ENCODE measurements at regions of chr14 and their contacts with region 1.

Region 1: DNA sequence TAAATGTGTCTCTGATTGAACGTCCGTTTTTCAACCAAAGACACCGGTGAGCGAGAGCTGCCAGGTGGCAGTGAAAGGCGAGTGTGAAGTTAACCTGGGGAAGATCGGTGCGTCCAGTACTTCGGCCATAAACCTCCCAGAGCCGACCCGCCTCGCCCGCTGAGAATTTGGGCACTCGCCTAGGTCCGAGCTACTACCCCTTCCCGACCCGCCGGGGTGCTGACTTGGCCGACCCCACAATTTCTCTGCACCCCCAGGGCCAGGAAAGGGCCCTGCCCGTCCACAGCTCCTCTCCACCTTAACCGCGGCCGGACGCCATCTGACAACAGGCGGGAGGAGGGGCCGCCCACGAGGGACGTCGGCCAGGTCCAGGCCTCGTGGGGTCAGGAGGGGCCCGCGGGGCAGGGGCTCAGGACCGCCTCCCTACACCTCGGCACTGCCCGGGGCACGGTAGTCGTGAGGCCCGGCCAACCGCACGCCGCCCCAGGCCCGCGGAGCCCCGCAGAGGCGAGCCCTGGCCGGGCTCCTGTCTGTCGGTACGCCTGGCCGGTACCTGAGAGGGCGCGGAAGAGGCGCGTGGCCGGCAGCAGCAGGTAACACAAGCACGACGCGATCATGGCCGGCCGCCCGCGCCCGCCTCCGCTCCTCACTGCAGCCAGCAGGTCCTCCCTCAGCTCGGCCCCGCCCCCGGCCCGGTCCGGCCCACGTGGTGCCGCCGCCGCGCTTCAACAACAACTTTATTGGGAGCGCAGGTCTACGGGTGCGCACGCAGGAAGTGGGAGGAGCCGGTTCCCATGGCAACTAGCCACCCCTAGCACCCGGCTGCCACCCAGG is at the start of gene ANGEL1:
- DNase-seq: peak; percentile 94 to 99 (median 98)
- ATAC-seq: peak; percentile 90
- H3K4me3 ChIP-seq: peak within 1 kb of the TSS; percentile 84
- H3K4me3 Mint-ChIP-seq: peak within 1 kb of the TSS; percentile 97
- H3K27ac ChIP-seq: peak within 1 kb of the TSS; percentile 67 to 85
- H3K27ac Mint-ChIP-seq: peak within 1 kb of the TSS; percentile 96
- H3K4me1 ChIP-seq: peaks cover 28% of the 10 kb centered on the region
- H3K4me1 Mint-ChIP-seq: peaks cover 35% of the 10 kb centered on the region
- H3K27me3 ChIP-seq: no peaks in the 10 kb centered on the region
- H3K27me3 Mint-ChIP-seq: no peaks in the 10 kb centered on the region
- CTCF ChIP-seq: no peak
- total RNA-seq, gene ANGEL1: 10.1 to 10.4 TPM

Region 2: GRCh38 chr14:76767681-76768656 is 44.5 kb before region 1 on chr14:
- CTCF ChIA-PET with region 1: no interaction called
- POLR2A ChIA-PET with region 1: interaction called, 7 read pairs
- intact Hi-C with region 1: loop called in 1 of 2 experiments (anchors 2 kb)
- DNase-seq: peak; percentile 37 to 98 (median 68)
- ATAC-seq: peak; percentile 96
- H3K4me3 ChIP-seq: peak overlapping the region; percentile 5
- H3K4me3 Mint-ChIP-seq: peak overlapping the region; percentile 43
- H3K27ac ChIP-seq: peak overlapping the region; percentile 70 to 78
- H3K27ac Mint-ChIP-seq: peak overlapping the region; percentile 94
- H3K4me1 ChIP-seq: peaks cover 38% of the 10 kb centered on the region
- H3K4me1 Mint-ChIP-seq: peaks cover 24% of the 10 kb centered on the region
- H3K27me3 ChIP-seq: peaks cover 0 to 2% of the 10 kb centered on the region in 2 experiments
- H3K27me3 Mint-ChIP-seq: no peaks in the 10 kb centered on the region
- CTCF ChIP-seq: no peak

Region 3: GRCh38 chr14:76829650-76830421 is 17.4 kb after region 1 on chr14:
- CTCF ChIA-PET with region 1: no interaction called
- POLR2A ChIA-PET with region 1: no interaction called
- intact Hi-C with region 1: no loop called
- DNase-seq: no peak
- ATAC-seq: no peak
- H3K4me3 ChIP-seq: no peak overlapping the region
- H3K4me3 Mint-ChIP-seq: no peak overlapping the region
- H3K27ac ChIP-seq: no peak overlapping the region
- H3K27ac Mint-ChIP-seq: no peak overlapping the region
- H3K4me1 ChIP-seq: no peaks in the 10 kb centered on the region
- H3K4me1 Mint-ChIP-seq: no peaks in the 10 kb centered on the region
- H3K27me3 ChIP-seq: peaks cover 0 to 3% of the 10 kb centered on the region in 2 experiments
- H3K27me3 Mint-ChIP-seq: peaks cover 12% of the 10 kb centered on the region
- CTCF ChIP-seq: no peak

Region 4: DNA sequence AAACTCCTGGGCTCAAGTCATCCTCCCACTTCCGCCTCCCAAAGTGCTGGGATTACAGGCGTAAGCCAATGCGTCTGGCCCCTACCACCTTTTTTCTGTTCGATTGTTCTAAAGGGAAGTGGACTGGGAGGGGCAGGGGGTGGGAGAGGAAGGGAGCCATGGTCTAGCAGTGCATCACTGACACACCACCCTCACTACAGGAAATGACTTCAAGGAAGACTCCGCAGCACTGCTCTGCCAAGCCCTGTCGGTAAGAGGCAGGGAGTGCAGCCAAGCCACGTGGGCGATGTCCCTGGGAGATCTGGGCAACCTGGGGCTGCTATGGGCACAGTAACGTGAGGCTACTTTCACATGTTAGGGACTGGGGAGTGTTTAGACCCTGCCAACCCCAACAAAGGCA is 31.8 kb after region 1 on chr14:
- CTCF ChIA-PET with region 1: no interaction called
- POLR2A ChIA-PET with region 1: no interaction called
- intact Hi-C with region 1: no loop called
- DNase-seq: peak; percentile 29 to 82 (median 54)
- ATAC-seq: peak; percentile 100
- H3K4me3 ChIP-seq: no peak overlapping the region
- H3K4me3 Mint-ChIP-seq: no peak overlapping the region
- H3K27ac ChIP-seq: no peak overlapping the region
- H3K27ac Mint-ChIP-seq: peak overlapping the region; percentile 57
- H3K4me1 ChIP-seq: peaks cover 14% of the 10 kb centered on the region
- H3K4me1 Mint-ChIP-seq: peaks cover 9% of the 10 kb centered on the region
- H3K27me3 ChIP-seq: no peaks in the 10 kb centered on the region
- H3K27me3 Mint-ChIP-seq: peaks cover 15% of the 10 kb centered on the region
- CTCF ChIP-seq: no peak

Region 5: GRCh38 chr14:77376771-77377501 is 564.5 kb after region 1 on chr14 and contains the starts of genes SAMD15 and TMED8:
- CTCF ChIA-PET with region 1: no interaction called
- POLR2A ChIA-PET with region 1: interaction called, 3 read pairs
- intact Hi-C with region 1: loop called in 1 of 2 experiments (anchors 5 kb)
- DNase-seq: peak; percentile 61 to 93 (median 79)
- ATAC-seq: peak; percentile 96
- H3K4me3 ChIP-seq: peak within 1 kb of the TSS; percentile 78
- H3K4me3 Mint-ChIP-seq: peak within 1 kb of the TSS; percentile 95
- H3K27ac ChIP-seq: peak within 1 kb of the TSS; percentile 67 to 89
- H3K27ac Mint-ChIP-seq: peak within 1 kb of the TSS; percentile 74
- H3K4me1 ChIP-seq: peaks cover 21% of the 10 kb centered on the region
- H3K4me1 Mint-ChIP-seq: peaks cover 41% of the 10 kb centered on the region
- H3K27me3 ChIP-seq: no peaks in the 10 kb centered on the region
- H3K27me3 Mint-ChIP-seq: no peaks in the 10 kb centered on the region
- CTCF ChIP-seq: no peak
- total RNA-seq, gene SAMD15: 0.34 TPM in 1 of 2 experiments, not detected in the other
- total RNA-seq, gene TMED8: 4.9 to 5.1 TPM

Measured in CD4-positive, alpha-beta T cell (primary cell).